ENCODE measurements at regions of chr4 and their contacts with region 1.

Region 1: DNA sequence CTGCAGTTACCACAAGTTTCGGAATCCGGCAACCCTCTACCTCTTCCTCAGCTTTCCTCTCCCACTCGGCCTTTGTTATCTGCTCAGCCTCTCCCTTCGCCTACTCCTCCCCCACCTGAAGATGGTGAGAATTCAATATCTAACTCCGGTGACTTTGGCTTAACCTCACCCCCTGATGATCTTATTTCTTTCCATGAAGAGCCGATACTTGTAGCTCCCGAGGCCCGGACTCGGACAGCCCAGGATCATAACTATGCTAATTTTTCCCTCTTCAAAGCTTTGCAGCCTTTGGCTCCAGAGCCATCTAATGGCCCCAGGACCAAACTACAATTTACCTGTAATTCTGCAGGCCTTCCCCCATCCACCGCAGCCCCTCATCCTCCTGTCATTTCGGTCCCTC is 32.0 kb upstream of the MGST2 start:
- DNase-seq: no peak
- H3K4me3 ChIP-seq: peak overlapping the region in 3 of 4 donors; percentile 17 to 37 (median 35)
- H3K27ac ChIP-seq: peak overlapping the region in 3 of 4 donors; percentile 39 to 71 (median 59)
- H3K4me1 ChIP-seq: no peaks in the 10 kb centered on the region
- H3K27me3 ChIP-seq: no peaks in the 10 kb centered on the region
- CTCF ChIP-seq: peak; percentile 38 to 63 (median 52)
- EP300 ChIP-seq: no peak
- POLR2A ChIP-seq: no peak

Region 2: GRCh38 chr4:139416073-139416673 is 217.5 kb before region 1 on chr4:
- intact Hi-C with region 1: loop called (anchors 5 kb)
- DNase-seq: no peak
- H3K4me3 ChIP-seq: no peak overlapping the region
- H3K27ac ChIP-seq: no peak overlapping the region
- H3K4me1 ChIP-seq: no peaks in the 10 kb centered on the region
- H3K27me3 ChIP-seq: no peaks in the 10 kb centered on the region
- CTCF ChIP-seq: peak; percentile 28 to 65 (median 50)
- EP300 ChIP-seq: no peak
- POLR2A ChIP-seq: no peak

Region 3: GRCh38 chr4:139501927-139502899 is 131.4 kb before region 1 on chr4:
- intact Hi-C with region 1: loop called (anchors 1 kb)
- DNase-seq: no peak
- H3K4me3 ChIP-seq: no peak overlapping the region
- H3K27ac ChIP-seq: no peak overlapping the region
- H3K4me1 ChIP-seq: peaks cover 0 to 5% (median 4%) of the 10 kb centered on the region in 4 donors
- H3K27me3 ChIP-seq: no peaks in the 10 kb centered on the region
- CTCF ChIP-seq: no peak
- EP300 ChIP-seq: no peak
- POLR2A ChIP-seq: no peak

Region 4: DNA sequence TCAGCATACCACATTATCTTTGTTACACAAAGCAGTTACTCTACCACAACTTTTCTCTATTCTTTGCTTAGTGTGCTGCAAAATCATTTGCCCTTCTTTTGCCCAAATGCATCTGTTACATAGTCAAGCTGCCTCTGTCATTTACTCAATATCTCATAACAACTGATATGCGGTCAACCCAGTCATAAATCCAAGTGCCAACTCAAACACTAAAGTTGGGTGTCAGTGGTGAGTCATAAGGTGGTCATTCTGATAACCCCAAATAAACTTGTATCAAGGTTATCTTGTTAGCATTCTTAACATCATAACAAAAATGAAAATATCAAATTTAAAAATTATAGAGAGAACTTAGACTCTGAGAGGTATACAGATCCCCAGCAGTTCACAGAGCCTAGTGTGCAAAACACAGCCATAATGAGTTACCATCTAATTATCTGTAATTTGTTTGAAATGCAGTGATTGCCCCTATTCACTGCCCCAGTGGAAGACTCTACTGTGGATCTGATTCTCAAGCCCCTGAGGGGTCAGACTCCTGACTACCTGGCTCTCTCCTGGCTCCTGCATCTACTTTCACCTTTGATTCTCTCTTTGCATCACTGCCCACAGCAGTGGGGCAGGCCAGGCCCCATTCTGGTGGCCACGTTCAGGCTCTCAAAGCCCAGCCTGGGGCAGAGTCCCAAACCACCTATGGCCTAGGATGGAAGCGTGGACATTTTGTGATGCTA is 1093.3 kb after region 1 on chr4:
- intact Hi-C with region 1: no loop called
- DNase-seq: no peak
- H3K4me3 ChIP-seq: no peak overlapping the region
- H3K27ac ChIP-seq: no peak overlapping the region
- H3K4me1 ChIP-seq: peaks cover 0 to 23% (median 16%) of the 10 kb centered on the region in 4 donors
- H3K27me3 ChIP-seq: no peaks in the 10 kb centered on the region
- CTCF ChIP-seq: no peak
- EP300 ChIP-seq: no peak
- POLR2A ChIP-seq: no peak

Measured in sigmoid colon (tissue), 7 donors.